HCT116 (cell line): ENCODE measurements at regions of chr5 and their contacts with region 1.

Region 1: GRCh38 chr5:127875235-127876021 is 172.2 kb downstream of the CCDC192 start:
- DNase-seq: peak; percentile 65
- ATAC-seq: peak; percentile 84
- H3K4me3 ChIP-seq: no peak overlapping the region
- H3K27ac ChIP-seq: peak overlapping the region; percentile 0; the same call in 1 of the 2 replicates
- H3K4me1 ChIP-seq: peaks cover 14 to 26% of the 10 kb centered on the region in 2 experiments
- H3K27me3 ChIP-seq: no peaks in the 10 kb centered on the region
- CTCF ChIP-seq: peak; percentile 5 to 53 (median 52); a peak in 3 of 6 replicates
- POLR2A ChIP-seq: no peak
- RAD21 ChIP-seq: peak; percentile 84

Region 2: GRCh38 chr5:127564002-127564769 is 311.2 kb before region 1 on chr5:
- CTCF ChIA-PET with region 1: interaction called, 4 read pairs
- POLR2A ChIA-PET with region 1: no interaction called
- RAD21 ChIA-PET with region 1: interaction called in 1 of 2 experiments, 3 read pairs
- intact Hi-C with region 1: loop called (anchors 10 kb)
- DNase-seq: peak; percentile 48
- ATAC-seq: peak; percentile 90
- H3K4me3 ChIP-seq: no peak overlapping the region
- H3K27ac ChIP-seq: no peak overlapping the region
- H3K4me1 ChIP-seq: no peaks in the 10 kb centered on the region
- H3K27me3 ChIP-seq: no peaks in the 10 kb centered on the region
- CTCF ChIP-seq: peak; percentile 52 to 82 (median 69); a peak in 5 of 6 replicates
- POLR2A ChIP-seq: no peak
- RAD21 ChIP-seq: peak; percentile 81

Region 3: DNA sequence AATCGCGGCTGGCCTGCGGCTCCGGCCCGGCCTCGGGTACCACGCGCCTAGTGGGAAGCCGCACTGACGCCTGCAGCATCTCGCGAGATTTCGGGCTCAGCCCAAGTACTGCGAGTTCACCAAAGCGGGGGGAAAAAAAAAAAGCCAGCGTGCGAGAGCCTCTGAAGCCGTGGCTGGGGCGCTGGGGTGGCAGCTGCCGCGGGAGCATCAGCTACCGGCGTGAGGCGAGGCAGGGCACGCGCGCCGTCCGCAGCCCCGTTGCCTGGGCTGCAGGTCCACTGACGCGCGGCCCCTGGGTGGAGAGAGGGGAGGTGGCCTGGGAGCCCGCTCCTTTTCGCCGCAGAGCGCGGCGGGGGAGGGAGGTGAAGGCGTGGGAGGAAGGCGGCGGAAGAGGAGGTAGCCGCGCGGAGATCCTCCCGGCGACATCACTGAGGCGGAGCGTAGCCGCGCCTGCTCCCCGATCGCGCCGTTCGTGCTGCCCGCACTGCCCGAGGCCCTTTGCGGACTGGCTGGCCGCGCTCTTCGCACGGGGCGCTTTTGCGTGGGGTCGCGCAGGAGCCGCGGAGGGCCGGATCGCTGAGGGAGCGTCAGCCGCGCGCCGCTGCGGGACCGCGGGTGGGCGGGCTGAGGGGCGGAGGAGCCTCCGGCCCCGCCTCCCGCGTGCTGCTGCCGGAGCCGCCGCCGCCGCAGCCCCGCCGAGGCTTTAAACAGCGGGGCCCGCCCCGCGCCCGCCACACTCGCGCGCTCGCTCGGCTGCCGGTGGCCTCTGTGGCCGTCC is 207.8 kb after region 1 on chr5 and contains the start of gene SLC12A2:
- CTCF ChIA-PET with region 1: interaction called, 15 read pairs
- POLR2A ChIA-PET with region 1: interaction called, 4 read pairs
- RAD21 ChIA-PET with region 1: no interaction called
- intact Hi-C with region 1: loop called (anchors 1 kb)
- DNase-seq: peak; percentile 95
- ATAC-seq: peak; percentile 73
- H3K4me3 ChIP-seq: peak within 1 kb of the TSS; percentile 75 to 77
- H3K27ac ChIP-seq: peak within 1 kb of the TSS; percentile 97
- H3K4me1 ChIP-seq: peaks cover 14 to 25% of the 10 kb centered on the region in 2 experiments; a peak in 3 of 4 replicates
- H3K27me3 ChIP-seq: no peaks in the 10 kb centered on the region
- CTCF ChIP-seq: no peak
- POLR2A ChIP-seq: peak; percentile 84
- RAD21 ChIP-seq: 0 out of 2 replicates have a peak, but pooled peaks have one; percentile 2
- total RNA-seq, gene SLC12A2: 41.2 TPM

Region 4: DNA sequence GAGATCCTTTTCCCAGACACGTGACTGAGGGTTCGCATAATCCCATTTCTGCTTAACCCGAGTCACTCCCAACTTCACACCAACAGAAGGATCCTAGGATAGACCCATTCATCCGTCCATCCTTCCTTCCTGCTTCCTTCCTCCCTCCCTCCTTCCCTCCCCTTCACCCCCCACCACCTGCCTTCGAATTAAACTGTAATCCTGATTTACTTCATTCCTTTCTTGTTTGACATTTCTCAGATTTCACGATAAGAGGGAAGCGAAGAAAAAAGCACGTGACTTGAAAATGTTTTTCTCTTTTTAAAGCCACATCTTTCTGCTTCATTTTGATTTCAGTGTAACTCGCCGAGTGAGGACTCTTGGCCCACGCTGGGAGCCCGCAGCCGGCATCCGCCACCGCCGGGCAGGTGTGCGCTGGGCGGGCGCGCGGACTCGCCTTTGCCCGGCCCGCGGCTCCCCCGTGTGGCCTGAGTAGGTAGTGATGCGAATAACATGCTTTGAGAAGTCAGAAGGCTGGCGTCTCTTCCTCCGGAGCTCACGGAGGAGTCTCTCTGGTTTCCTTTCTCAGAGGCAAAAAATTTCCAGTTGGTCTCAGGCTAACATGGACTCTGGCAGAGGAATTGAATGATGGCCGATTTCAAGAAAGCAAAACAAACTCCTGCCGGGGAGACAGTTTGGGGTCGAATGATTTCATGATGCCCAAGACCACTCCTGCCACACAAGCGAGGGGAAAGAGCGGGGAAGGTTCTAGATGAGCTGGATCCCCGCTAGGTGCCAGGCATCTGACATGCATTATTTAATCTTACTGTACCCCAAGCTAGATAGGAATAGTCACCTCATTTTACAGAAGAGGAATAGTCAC is 325.9 kb after region 1 on chr5:
- CTCF ChIA-PET with region 1: interaction called, 5 read pairs
- POLR2A ChIA-PET with region 1: no interaction called
- RAD21 ChIA-PET with region 1: interaction called, 3 read pairs
- intact Hi-C with region 1: loop called (anchors 2 kb)
- DNase-seq: no peak
- ATAC-seq: peak; percentile 60
- H3K4me3 ChIP-seq: no peak overlapping the region
- H3K27ac ChIP-seq: no peak overlapping the region
- H3K4me1 ChIP-seq: peaks cover 9 to 18% of the 10 kb centered on the region in 2 experiments
- H3K27me3 ChIP-seq: no peaks in the 10 kb centered on the region
- CTCF ChIP-seq: peak; percentile 19 to 66 (median 39); a peak in 4 of 6 replicates
- POLR2A ChIP-seq: no peak
- RAD21 ChIP-seq: peak; percentile 53

Region 5: GRCh38 chr5:128844354-128844923 is 969.0 kb after region 1 on chr5:
- CTCF ChIA-PET with region 1: no interaction called
- POLR2A ChIA-PET with region 1: no interaction called
- RAD21 ChIA-PET with region 1: no interaction called
- intact Hi-C with region 1: loop called (anchors 2 kb)
- DNase-seq: no peak
- ATAC-seq: no peak
- H3K4me3 ChIP-seq: no peak overlapping the region
- H3K27ac ChIP-seq: no peak overlapping the region
- H3K4me1 ChIP-seq: no peaks in the 10 kb centered on the region
- H3K27me3 ChIP-seq: no peaks in the 10 kb centered on the region
- CTCF ChIP-seq: peak in 2 of 3 experiments; percentile 35 to 46; a peak in 3 of 6 replicates
- POLR2A ChIP-seq: no peak
- RAD21 ChIP-seq: peak; percentile 68